ENCODE measurements at regions of chr14 and their contacts with region 1.

Region 1: DNA sequence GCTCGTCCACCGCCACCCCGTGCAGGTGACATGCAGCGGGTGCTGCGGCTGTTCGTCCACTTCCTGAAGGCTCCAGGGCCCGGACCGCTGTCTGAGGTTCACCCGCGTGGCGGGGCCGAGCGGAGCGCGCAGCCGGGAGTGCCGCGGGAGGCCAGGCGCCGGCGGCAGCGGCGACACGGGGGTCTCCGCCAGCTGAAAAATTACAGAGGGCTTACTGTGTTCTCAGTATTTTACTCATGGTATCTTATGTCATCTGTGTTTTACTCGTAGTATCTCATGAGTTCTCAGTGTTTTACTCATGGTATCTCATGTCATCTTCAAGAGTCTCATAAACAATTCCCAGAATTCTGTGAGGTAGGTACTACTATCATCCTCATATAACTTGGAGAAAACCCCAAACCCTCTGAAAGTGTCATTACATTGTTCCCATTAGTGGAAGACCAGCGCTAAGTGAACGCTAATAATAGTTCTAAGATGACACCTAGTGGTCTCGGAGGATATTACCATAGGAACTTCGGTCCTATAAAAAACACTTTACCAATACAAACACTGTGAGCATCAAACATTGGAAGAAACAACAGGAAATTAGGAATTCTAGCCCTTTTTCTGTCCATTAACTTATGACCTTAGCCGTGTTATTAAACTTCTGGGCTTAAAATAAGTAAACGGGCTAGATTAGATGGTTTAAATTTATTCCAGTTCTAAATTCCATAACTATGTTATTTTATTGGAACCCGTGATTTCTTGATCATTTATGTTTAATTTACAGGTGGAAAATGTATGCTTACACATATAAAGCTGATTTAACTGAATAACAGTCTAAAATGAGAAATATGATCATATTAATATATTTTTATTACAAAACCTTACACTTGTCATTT is 32.4 kb downstream of the AK7 start:
- DNase-seq: peak in 2 of 10 donors; percentile 15 to 52
- H3K4me3 ChIP-seq: peak overlapping the region; percentile 27 to 70 (median 55)
- H3K27ac ChIP-seq: peak overlapping the region in 23 of 59 donors; percentile 9 to 89 (median 72)
- H3K27me3 ChIP-seq: no peaks in the 10 kb centered on the region
- CTCF ChIP-seq: peak; percentile 72 to 96 (median 86)

Region 2: GRCh38 chr14:96297000-96297399 is 127.3 kb before region 1 on chr14:
- intact Hi-C with region 1: loop called (anchors 2 kb)
- DNase-seq: no peak
- H3K4me3 ChIP-seq: no peak overlapping the region
- H3K27ac ChIP-seq: no peak overlapping the region
- H3K27me3 ChIP-seq: no peaks in the 10 kb centered on the region
- CTCF ChIP-seq: peak; percentile 51 to 85 (median 67)

Region 3: DNA sequence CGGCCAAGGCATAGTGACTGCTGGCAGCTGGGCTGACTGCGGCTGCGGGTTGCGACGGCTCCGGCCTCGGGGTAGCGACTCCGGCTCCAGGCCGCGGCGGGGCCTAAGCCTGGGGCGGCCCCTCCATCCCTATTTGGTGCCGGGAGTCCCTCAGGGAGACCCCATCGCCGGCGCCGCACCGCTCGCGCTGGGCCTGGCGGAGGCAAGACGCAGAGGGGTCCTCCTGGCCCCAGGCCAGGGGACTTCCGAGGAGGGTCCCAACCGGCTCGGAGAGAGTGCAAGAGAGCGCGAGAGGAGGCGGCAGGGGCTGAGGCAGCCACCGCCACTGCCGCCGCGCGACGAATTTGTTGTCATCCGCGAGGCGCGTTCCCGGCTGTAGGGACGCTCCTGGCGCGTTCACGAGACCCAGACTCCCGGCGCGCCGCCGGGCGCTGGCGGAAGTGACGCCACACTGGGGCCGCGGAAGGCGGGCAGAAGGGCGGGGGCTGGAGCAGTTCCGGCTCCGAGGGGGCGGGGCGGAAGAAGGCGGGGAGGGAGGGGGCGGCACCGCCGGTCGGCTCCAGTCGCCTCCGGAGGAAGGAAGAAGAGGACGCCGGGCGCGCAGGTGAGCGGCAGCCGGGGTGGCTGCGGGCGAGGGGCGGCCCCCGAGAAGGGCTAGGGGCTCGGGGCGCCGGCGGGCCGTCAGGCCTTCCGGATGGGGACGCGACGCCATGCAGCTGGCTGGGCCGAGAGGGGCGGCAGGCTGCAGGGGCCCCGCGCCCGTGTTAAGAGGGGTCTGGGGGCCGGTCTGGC is 61.2 kb before region 1 on chr14 and contains the starts of genes ATG2B and GSKIP:
- intact Hi-C with region 1: loop called (anchors 2 to 10 kb)
- DNase-seq: peak; percentile 88 to 97 (median 94)
- H3K4me3 ChIP-seq: peak within 1 kb of the TSS; percentile 83 to 100 (median 98)
- H3K27ac ChIP-seq: peak within 1 kb of the TSS; percentile 66 to 98 (median 92)
- H3K27me3 ChIP-seq: no peaks in the 10 kb centered on the region
- CTCF ChIP-seq: peak in 18 of 56 donors; percentile 7 to 48 (median 23)
- total RNA-seq, gene ATG2B: 35.1 to 92.2 (median 66.5) TPM
- total RNA-seq, gene GSKIP: 14.6 to 47.7 (median 30.5) TPM